ENCODE measurements at regions of chr1 and their contacts with region 1.

Region 1: GRCh38 chr1:33367485-33368405 is 46.8 kb upstream of the A3GALT2 start:
- DNase-seq: peak in 1 of 2 donors; percentile 92
- H3K4me3 ChIP-seq: peak overlapping the region in 1 of 2 donors; percentile 36
- H3K27ac ChIP-seq: peak overlapping the region; percentile 73 to 87
- H3K4me1 ChIP-seq: peaks cover 12 to 46% of the 10 kb centered on the region in 2 donors
- H3K27me3 ChIP-seq: no peaks in the 10 kb centered on the region
- CTCF ChIP-seq: peak; percentile 94 to 98 (median 96)

Region 2: GRCh38 chr1:33219881-33220661 is 147.7 kb before region 1 on chr1:
- intact Hi-C with region 1: loop called (anchors 2 kb)
- DNase-seq: no peak
- H3K4me3 ChIP-seq: no peak overlapping the region
- H3K27ac ChIP-seq: no peak overlapping the region
- H3K4me1 ChIP-seq: peaks cover 0 to 2% of the 10 kb centered on the region in 2 donors
- H3K27me3 ChIP-seq: no peaks in the 10 kb centered on the region
- CTCF ChIP-seq: no peak

Region 3: DNA sequence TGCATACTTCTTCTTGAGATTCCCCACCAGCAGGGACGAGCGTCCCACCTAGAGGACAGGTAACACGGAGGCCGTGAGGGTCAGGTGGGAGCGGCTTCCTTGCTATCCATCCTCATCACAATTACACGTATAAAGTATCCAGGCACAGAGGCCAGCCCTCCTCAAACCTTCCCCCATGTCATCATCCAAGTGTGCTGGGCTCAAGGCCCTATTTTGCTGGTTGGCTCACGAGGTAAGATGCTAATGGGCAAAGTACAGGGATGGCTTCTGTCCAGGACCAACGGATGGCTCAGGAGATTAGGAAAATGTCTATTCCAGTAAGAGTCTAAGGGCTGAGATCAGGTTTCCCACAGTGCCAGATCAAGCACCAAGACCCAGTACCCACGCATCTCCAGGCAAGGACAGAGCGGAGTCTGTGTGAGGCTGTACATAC is 35.4 kb before region 1 on chr1:
- intact Hi-C with region 1: loop called (anchors 2 kb)
- DNase-seq: peak in 1 of 2 donors; percentile 66
- H3K4me3 ChIP-seq: no peak overlapping the region
- H3K27ac ChIP-seq: peak overlapping the region; percentile 80
- H3K4me1 ChIP-seq: peaks cover 36 to 70% of the 10 kb centered on the region in 2 donors
- H3K27me3 ChIP-seq: no peaks in the 10 kb centered on the region
- CTCF ChIP-seq: no peak

Region 4: DNA sequence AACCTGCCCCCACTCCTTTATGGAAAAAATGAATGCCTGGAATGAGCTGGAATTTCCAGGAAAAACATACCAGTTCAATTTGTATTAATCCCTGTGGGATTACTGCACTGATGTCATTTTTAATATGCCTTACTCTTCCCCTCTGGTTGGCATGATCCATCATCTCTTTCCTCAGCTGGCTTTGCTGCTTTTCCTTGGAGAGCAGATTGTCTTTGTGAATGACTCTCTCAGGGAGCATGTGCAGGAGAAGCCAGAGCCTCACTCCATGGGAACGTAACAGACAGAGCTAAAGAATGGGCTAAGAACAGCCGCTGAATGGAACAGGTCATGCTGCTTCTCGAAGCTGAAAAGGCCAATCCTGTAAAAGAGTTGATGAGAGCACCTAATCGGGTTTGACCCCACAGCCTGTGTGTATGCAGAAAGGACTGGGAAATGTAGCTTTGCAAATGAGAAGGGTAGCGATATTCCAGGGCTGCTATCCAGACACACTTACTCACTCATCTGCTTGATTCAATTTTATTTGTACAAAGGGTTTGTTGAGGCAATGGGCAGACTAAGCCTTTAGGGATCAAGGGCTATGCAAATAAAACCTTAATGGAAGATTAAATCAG is 42.5 kb after region 1 on chr1:
- intact Hi-C with region 1: loop called (anchors 2 kb)
- DNase-seq: peak; percentile 11 to 90
- H3K4me3 ChIP-seq: no peak overlapping the region
- H3K27ac ChIP-seq: peak overlapping the region; percentile 56 to 84
- H3K4me1 ChIP-seq: peaks cover 3 to 9% of the 10 kb centered on the region in 2 donors
- H3K27me3 ChIP-seq: no peaks in the 10 kb centered on the region
- CTCF ChIP-seq: no peak

Region 5: DNA sequence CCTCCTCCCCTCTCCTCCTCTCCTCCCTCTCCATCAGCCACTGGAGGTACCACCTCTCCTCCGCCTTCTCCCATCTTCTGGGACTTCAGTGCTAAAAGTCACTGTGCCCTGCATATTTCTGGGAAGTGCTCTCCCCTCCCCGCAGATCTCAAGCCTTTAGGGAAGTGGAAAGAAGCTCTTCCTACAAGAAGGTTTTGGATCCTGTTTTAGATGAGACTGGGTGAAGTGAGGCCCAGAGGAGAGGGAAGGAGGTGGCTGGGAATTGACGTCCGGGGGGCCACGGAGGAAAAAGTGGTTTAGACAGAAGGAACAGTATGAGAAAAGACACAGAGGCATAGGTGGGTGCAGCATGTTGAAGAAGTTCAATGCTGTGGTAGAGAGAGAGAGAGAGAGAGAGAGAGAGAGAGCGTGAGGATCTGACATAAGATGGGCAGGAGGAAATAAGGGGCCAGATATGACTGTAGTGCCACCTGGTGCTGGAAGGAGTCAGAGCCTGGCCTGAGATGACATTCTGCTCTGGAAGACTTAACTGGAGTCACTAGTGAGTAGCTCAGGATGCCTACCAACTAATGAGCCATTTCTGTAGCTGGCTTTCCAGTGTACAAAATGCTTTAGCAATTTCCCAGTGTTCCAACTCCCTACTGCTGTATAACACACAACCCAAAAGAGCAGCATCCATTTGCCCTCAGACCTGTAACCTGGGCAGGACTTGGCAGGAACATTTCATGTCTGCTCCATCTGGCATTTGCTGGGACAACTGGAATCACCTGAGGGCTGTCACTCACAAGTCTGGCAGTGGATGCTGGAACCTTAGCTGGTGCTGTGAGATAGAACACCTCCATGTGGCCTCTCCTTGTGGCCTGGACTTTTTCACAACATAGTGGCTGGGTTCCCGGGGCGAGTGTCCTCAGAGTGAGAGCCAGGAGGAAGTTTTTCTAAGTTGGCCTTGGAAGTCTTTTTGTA is 88.1 kb after region 1 on chr1:
- intact Hi-C with region 1: loop called (anchors 5 kb)
- DNase-seq: peak in 1 of 2 donors; percentile 78
- H3K4me3 ChIP-seq: no peak overlapping the region
- H3K27ac ChIP-seq: peak overlapping the region; percentile 22 to 69
- H3K4me1 ChIP-seq: peaks cover 6 to 36% of the 10 kb centered on the region in 2 donors
- H3K27me3 ChIP-seq: no peaks in the 10 kb centered on the region
- CTCF ChIP-seq: peak; percentile 40 to 64 (median 61)

Measured in ascending aorta (tissue), 2 donors.